Breast epithelium (tissue), 4 donors: ENCODE measurements at regions of chrX and their contacts with region 1.

Region 1: DNA sequence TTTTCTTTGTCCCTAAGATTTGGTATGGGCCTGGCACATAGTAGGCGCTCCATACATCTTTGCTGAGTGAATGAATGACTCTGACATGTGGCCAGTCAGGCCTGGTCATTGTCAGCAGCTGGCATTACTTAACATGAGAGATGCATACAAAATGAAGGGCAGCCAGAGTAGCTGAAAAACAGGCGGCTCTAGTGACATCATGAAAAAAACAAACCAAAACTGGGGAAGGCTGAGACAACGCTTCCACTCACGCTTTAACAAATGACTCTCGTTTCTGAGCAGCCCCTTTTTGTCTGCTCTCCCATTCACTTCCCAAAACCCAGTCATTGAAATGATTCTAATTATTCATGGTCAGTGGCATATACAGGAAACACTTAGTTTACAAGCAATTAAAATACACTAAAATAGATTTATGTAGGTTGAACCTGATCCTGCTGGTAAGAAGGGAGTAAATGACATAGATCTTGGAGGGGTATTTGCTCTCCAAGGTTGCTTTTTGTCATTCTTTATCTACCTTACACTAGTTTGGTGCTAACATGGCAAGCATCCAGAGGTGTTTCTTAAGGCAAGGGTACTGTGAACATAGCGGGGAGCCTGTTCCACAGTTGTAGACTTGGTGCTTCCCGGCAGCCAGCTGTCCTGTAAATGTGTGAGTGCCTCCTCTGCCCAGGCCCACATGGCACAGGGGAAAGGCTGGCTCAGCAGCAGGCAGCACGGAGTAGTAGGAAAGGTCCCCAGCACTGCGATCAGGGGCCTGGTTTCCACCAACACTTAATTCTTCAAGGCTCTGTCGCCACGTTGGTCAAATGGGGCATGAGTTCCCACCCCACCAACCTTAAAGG is 61.1 kb upstream of the CITED1 start:
- DNase-seq: no peak
- H3K4me3 ChIP-seq: no peak overlapping the region
- H3K27ac ChIP-seq: no peak overlapping the region
- H3K4me1 ChIP-seq: no peaks in the 10 kb centered on the region
- H3K27me3 ChIP-seq: peaks cover 0 to 52% of the 10 kb centered on the region in 2 donors
- CTCF ChIP-seq: no peak
- POLR2A ChIP-seq: no peak

Region 2: GRCh38 chrX:71606536-71607216 is 760.2 kb before region 1 on chrX:
- intact Hi-C with region 1: no loop called
- DNase-seq: no peak
- H3K4me3 ChIP-seq: no peak overlapping the region
- H3K27ac ChIP-seq: no peak overlapping the region
- H3K4me1 ChIP-seq: no peaks in the 10 kb centered on the region
- H3K27me3 ChIP-seq: peaks cover 0 to 41% of the 10 kb centered on the region in 2 donors
- CTCF ChIP-seq: no peak
- POLR2A ChIP-seq: no peak

Region 3: DNA sequence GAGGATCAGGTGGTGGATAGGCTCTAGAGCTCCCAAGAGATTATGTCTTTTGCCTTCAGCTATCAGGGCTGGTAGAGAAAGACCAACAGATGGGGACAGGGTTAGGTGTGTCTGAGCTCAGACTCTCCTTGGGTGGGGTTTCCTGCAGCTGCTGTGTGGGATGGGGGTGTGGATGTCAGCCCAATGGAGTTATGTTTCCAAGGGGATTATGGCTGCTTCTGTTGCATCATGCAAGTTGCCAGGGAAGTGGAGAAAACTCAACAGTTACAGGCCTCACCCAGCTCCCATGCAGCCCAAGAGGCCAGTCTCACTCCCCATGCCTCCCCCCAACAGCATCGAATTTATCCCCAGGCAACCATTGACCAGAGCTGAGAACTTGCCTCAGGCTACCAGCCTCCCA is 999.9 kb after region 1 on chrX:
- intact Hi-C with region 1: loop called (anchors 10 kb)
- DNase-seq: no peak
- H3K4me3 ChIP-seq: no peak overlapping the region
- H3K27ac ChIP-seq: no peak overlapping the region
- H3K4me1 ChIP-seq: no peaks in the 10 kb centered on the region
- H3K27me3 ChIP-seq: peaks cover 0 to 6% of the 10 kb centered on the region in 2 donors
- CTCF ChIP-seq: no peak
- POLR2A ChIP-seq: no peak